ENCODE measurements at regions of chr19 and their contacts with region 1.

Region 1: GRCh38 chr19:16628183-16628983 is at the start of gene MED26:
- DNase-seq: peak; percentile 98
- total RNA-seq, gene MED26: 5.9 to 6.1 TPM

Region 2: DNA sequence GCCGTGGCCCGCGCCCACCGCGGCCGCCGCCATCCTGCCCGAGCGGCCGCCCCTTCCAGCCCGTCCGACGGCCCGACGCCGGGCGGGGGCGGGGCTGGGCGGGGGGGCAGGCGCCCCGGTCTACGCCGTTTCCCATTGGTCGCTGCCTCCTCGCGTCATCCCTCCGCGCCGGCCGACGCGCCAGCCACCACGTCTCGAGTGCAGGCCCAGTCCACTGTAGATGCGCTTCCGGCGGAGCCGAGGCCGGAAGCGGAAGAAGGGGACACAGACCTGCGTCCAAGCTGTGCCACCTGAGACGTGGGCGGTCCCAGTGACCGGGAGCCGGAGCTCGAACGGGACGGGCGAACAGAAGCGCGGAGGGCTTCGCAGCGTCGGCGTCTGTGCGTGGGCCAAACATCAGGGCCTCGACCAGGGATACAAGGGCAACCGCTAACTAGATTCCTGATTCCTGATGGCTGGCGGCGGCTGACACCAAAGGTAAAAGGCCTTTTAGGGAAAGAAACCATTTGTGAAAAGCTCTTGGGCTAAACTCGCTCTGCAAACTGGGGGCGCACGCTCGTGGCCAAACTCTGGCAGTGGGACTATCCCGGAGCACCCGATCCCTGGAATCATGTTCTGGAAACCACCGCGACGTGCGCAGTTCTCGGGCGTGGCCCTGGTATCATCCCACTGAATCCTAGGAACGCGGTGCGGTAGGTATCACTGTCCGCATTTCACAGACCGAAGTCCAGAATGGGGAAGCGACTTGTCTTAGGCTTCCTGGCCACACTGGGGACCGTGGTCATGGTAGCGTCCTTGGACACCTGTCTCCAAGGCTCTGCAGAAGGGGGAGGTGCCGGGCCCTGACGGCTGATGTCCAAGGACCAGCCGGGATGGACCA is 55.8 kb before region 1 on chr19 and contains the start of gene SLC35E1:
- intact Hi-C with region 1: loop called (anchors 10 kb)
- DNase-seq: peak; percentile 99
- total RNA-seq, gene SLC35E1: 30.8 to 33.6 TPM

Region 3: GRCh38 chr19:16702118-16702517 is 73.7 kb after region 1 on chr19:
- intact Hi-C with region 1: loop called in 1 of 2 experiments (anchors 2 kb)
- DNase-seq: no peak